Transverse colon (tissue), 4 donors: ENCODE measurements at regions of chr3 and their contacts with region 1.

Region 1: GRCh38 chr3:46935168-46935858 is 41.2 kb downstream of the CCDC12 start:
- DNase-seq: peak; percentile 58
- H3K4me3 ChIP-seq: no peak overlapping the region
- H3K27ac ChIP-seq: peak overlapping the region; percentile 67 to 87 (median 78)
- H3K4me1 ChIP-seq: peaks cover 57 to 82% (median 71%) of the 10 kb centered on the region in 4 donors
- H3K27me3 ChIP-seq: no peaks in the 10 kb centered on the region
- CTCF ChIP-seq: peak; percentile 40 to 56 (median 41)
- EP300 ChIP-seq: no peak
- POLR2A ChIP-seq: no peak

Region 2: DNA sequence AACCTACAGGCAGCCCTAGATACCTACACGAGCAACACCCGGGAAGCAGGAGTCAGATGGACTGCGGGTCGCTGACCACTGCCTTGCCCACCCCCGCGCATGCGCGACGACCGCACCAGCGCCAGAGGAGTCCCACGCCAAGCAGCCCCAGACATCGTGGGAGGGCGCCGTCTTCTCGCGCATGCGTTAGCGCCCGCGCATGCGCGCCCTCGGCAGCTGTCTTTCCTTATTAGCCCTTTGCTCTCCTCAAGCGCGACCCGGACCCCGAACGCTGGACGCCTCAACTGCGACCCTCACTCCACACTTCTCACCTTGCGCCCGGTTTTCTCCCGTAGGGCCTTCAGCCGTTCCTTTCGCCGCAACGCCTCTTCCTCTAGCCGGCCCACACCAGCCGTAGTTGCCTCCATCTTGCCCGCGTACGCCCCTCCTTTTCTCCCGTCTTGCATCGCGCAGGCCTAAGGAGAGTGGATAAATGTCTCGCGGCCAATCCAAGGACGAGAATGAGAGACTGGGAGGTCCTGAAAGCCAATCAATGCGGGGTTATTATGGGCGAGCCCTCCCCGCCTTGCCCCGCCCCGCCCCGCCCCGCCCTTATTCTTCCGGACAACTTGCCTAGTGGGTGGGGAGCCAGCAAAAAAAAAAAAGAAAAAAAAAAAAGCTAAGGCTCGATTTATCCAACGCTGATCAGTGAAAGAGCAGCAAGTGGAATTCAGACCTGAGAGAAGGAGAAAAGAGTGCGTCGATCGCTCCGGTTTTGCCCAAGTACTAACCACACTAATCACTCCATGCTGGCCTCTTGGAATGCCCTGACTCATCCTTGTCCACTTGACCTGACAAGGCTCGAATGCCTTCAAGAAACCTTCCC is 41.2 kb after region 1 on chr3 and contains the start of gene CCDC12:
- in situ Hi-C with region 1: loop called in 1 of 4 experiments (anchors 10 kb)
- intact Hi-C with region 1: loop called (anchors 5 kb)
- DNase-seq: peak; percentile 96
- H3K4me3 ChIP-seq: peak within 1 kb of the TSS; percentile 60 to 76 (median 74)
- H3K27ac ChIP-seq: peak within 1 kb of the TSS; percentile 91 to 95 (median 94)
- H3K4me1 ChIP-seq: peaks cover 16 to 74% (median 54%) of the 10 kb centered on the region in 4 donors
- H3K27me3 ChIP-seq: no peaks in the 10 kb centered on the region
- CTCF ChIP-seq: no peak
- EP300 ChIP-seq: no peak
- POLR2A ChIP-seq: peak; percentile 89
- total RNA-seq, gene CCDC12: 50.1 to 72.9 (median 53.0) TPM

Region 3: DNA sequence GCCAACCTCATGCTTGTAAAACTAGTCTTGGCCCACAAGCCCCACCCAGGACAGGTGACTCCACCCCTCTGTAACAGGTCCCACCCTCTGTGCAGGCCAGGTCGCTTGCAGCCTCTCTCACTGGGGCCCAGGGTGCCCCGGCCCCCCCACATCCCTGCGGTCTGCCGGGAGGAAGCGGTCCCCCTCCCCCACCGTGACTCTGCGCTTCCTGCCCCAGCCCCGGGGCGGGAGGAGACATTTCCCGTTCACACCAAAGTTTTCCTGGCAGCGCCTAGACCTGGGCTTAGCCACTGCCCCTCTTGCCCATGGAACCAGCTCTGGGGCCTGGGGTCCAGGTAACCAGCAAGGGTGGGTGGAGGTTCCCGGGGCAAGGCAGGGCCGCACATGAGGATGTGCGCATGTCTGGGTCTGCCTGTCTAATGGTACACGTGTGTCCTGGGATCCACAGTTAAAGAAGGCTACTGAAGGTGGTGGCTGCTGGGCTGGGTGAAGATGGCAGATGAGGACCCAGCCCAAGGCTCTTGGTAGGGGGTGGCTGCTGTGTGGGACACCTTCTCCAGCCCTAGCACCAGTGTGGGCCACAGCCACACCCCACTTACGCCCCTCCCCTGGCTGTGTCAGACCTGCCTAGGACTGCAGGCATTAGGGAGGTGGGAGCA is 52.6 kb after region 1 on chr3:
- in situ Hi-C with region 1: loop called in 1 of 4 experiments (anchors 10 kb)
- intact Hi-C with region 1: no loop called
- DNase-seq: peak; percentile 87
- H3K4me3 ChIP-seq: peak overlapping the region in 2 of 4 donors; percentile 4 to 27
- H3K27ac ChIP-seq: peak overlapping the region; percentile 58 to 68 (median 62)
- H3K4me1 ChIP-seq: peaks cover 11 to 31% (median 26%) of the 10 kb centered on the region in 4 donors
- H3K27me3 ChIP-seq: no peaks in the 10 kb centered on the region
- CTCF ChIP-seq: no peak
- EP300 ChIP-seq: no peak
- POLR2A ChIP-seq: no peak

Region 4: GRCh38 chr3:47225310-47225906 is 290.1 kb after region 1 on chr3:
- in situ Hi-C with region 1: no loop called
- intact Hi-C with region 1: no loop called
- DNase-seq: peak; percentile 14
- H3K4me3 ChIP-seq: no peak overlapping the region
- H3K27ac ChIP-seq: no peak overlapping the region
- H3K4me1 ChIP-seq: no peaks in the 10 kb centered on the region
- H3K27me3 ChIP-seq: no peaks in the 10 kb centered on the region
- CTCF ChIP-seq: no peak
- EP300 ChIP-seq: no peak
- POLR2A ChIP-seq: no peak